Body of pancreas (tissue), 4 donors: ENCODE measurements at regions of chr18 and their contacts with region 1.

Region 1: GRCh38 chr18:54679318-54680149 is 88.5 kb downstream of the DYNAP start:
- DNase-seq: peak in 1 of 4 donors; percentile 34
- ATAC-seq: peak; percentile 87
- H3K4me3 ChIP-seq: no peak overlapping the region
- H3K27ac ChIP-seq: no peak overlapping the region
- H3K4me1 ChIP-seq: peaks cover 5% of the 10 kb centered on the region
- H3K27me3 ChIP-seq: no peaks in the 10 kb centered on the region
- CTCF ChIP-seq: peak; percentile 32 to 90 (median 75)
- POLR2A ChIP-seq: no peak

Region 2: DNA sequence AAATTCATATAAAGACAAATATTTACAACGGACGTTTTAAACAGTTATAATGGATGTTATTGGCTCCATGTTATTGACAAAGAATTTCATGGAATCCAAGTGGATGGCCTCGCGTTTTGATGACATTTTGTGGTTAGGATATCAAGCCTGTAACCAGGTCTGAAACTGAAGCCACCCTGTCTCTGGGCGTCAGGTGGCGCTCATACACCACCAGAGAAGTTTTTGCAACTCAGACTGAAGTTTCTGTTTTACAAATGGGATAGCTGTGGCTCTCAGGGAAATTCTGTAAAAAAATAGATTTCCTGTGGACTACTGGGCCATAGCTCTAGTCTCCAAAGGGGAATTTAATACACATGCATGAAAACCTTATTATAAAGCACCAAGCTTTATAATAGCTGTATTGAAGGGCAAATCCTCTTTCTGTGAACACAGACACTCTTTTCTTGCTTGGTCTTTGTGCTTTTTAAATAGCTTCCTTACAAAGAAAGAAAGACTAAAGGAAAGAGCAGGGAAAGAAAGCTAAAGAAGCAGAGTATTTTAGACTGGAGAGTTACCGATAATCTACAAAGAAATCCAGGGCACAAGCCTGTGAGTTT is 235.1 kb before region 1 on chr18:
- intact Hi-C with region 1: loop called (anchors 10 kb)
- DNase-seq: peak; percentile 42 to 63 (median 54)
- ATAC-seq: peak; percentile 71
- H3K4me3 ChIP-seq: no peak overlapping the region
- H3K27ac ChIP-seq: no peak overlapping the region
- H3K4me1 ChIP-seq: no peaks in the 10 kb centered on the region
- H3K27me3 ChIP-seq: no peaks in the 10 kb centered on the region
- CTCF ChIP-seq: peak; percentile 44 to 83 (median 68)
- POLR2A ChIP-seq: no peak

Region 3: DNA sequence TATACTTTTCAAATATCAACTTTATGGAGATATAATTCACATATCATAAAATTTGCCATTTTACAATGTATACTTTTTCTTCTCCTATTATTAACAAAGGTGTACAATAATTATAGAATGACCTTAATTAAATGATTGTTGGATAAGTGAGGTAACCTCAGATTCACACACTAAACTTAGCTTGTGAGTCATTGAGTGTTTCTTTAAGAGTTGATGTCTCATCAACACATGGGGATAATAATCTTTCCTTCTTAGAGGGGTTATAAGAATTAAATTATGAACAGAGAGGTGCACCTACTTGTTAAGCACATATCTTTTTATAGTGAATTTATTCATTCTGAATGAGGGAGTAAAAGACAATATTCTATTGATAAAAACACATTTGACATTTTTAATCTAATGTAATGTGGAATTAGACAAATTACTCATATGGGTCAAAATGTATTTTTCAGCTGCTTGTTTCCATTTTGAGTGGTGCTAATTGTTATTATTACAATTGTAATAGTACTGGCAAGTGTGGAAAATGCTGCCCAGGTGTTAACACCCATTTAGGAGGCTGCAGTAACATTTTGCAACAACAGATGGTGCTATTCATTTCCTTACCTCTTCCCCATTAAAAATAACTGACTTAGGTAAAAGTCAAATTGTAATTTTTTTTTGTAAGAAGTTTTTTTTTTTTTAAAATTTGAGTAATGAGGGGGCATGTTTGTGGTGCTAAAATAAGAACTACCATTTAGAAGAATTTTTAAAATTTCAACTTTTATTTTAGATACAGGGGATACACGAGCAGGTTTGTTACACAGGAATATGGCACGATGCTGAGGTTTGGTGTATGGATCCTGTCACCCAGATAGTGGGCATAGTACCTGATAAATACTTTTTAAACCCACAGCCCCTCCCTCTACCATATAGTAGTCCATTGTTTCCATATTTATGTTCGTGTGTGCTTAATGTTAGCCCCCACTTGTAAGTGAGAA is 120.6 kb before region 1 on chr18:
- intact Hi-C with region 1: loop called (anchors 10 kb)
- DNase-seq: peak in 2 of 4 donors; percentile 28 to 33
- ATAC-seq: no peak
- H3K4me3 ChIP-seq: no peak overlapping the region
- H3K27ac ChIP-seq: no peak overlapping the region
- H3K4me1 ChIP-seq: no peaks in the 10 kb centered on the region
- H3K27me3 ChIP-seq: no peaks in the 10 kb centered on the region
- CTCF ChIP-seq: peak; percentile 25 to 89 (median 73)
- POLR2A ChIP-seq: no peak

Region 4: GRCh38 chr18:54958657-54959625 is 279.4 kb after region 1 on chr18 and contains the start of gene CCDC68:
- intact Hi-C with region 1: loop called (anchors 10 kb)
- DNase-seq: peak; percentile 75 to 86 (median 78)
- ATAC-seq: peak; percentile 98
- H3K4me3 ChIP-seq: peak within 1 kb of the TSS; percentile 20 to 40
- H3K27ac ChIP-seq: peak within 1 kb of the TSS; percentile 52 to 74 (median 68)
- H3K4me1 ChIP-seq: peaks cover 22% of the 10 kb centered on the region
- H3K27me3 ChIP-seq: no peaks in the 10 kb centered on the region
- CTCF ChIP-seq: no peak
- POLR2A ChIP-seq: peak in 2 of 3 donors; percentile 35 to 47
- total RNA-seq, gene CCDC68: 5.3 to 13.0 TPM

Region 5: GRCh38 chr18:54983041-54983686 is 303.6 kb after region 1 on chr18:
- intact Hi-C with region 1: loop called (anchors 10 kb)
- DNase-seq: peak in 1 of 4 donors; percentile 40
- ATAC-seq: peak; percentile 80
- H3K4me3 ChIP-seq: no peak overlapping the region
- H3K27ac ChIP-seq: no peak overlapping the region
- H3K4me1 ChIP-seq: no peaks in the 10 kb centered on the region
- H3K27me3 ChIP-seq: no peaks in the 10 kb centered on the region
- CTCF ChIP-seq: peak; percentile 18 to 73 (median 65)
- POLR2A ChIP-seq: no peak